B cell (primary cell): ENCODE measurements at regions of chr12 and their contacts with region 1.

Region 1: DNA sequence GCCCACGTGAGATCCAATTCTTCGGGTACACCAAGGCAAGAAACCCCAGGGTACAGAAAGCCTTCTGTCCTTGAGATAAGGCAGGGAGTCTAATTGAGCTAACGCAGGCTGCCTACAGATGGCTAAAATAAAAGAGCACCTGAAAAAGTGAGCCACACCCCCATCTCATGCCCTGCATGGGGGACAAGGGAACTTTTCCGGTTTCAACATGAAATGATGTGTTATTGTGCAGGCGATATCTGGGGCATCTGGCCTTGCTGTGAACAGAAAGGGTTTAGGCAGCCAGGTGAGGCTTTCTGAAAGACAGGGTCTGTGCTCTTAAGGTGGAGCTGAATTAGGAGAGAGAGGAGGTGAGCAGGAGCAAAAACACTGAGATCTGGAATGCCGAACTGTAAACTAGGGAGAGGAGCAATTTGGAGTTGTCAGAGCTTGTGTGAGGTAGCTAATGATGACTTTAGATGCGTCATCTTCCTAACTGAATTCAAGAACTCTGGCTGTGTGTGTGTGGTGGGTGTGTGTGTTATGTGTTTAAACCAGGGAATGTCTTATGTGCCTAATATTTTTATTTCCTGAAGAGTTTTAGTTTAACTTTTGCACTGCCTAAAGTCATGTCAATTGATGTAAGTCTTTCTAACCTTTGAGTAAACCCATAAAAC is 20.1 kb upstream of the LDHB start:
- DNase-seq: no peak
- ATAC-seq: no peak
- H3K4me3 ChIP-seq: no peak overlapping the region
- H3K4me3 Mint-ChIP-seq: no peak overlapping the region
- H3K27ac ChIP-seq: no peak overlapping the region
- H3K27ac Mint-ChIP-seq: no peak overlapping the region
- H3K4me1 ChIP-seq: no peaks in the 10 kb centered on the region
- H3K4me1 Mint-ChIP-seq: no peaks in the 10 kb centered on the region
- H3K27me3 ChIP-seq: no peaks in the 10 kb centered on the region
- H3K27me3 Mint-ChIP-seq: peaks cover 11% of the 10 kb centered on the region
- CTCF ChIP-seq: no peak

Region 2: DNA sequence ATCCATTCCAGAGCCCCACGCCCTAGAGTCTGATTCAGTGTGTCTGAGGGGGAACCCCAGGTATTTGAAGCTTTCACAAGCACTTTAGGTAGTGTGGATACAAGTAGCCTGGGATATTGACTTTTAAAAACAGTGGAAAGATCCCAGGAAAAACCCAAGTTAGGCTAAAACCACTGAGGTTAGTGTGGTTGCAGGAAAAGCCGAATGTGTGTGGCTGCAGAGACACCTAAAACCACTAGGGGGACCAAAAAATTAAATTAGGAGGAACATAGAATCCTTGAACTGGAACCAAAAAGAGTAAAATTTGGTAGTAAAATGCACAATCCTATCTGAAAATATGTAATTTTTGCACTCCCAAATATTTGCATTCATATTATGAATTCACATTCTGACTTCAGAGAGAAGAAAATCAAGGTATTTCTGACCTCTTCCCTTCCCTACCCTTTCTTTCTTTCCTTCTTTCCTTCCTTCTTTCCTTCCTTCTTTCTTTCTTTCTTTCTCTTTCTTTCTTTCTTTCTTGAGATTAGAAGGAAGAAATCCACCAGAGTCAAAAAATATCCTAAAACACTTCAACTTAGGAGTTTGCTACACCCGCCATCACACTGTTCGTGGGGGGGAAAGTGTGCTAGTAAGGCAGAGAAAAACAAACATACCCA is 380.9 kb before region 1 on chr12:
- CTCF ChIA-PET with region 1: interaction called, 8 read pairs
- POLR2A ChIA-PET with region 1: no interaction called
- intact Hi-C with region 1: loop called (anchors 1 kb)
- DNase-seq: peak; percentile 10
- ATAC-seq: no peak
- H3K4me3 ChIP-seq: no peak overlapping the region
- H3K4me3 Mint-ChIP-seq: no peak overlapping the region
- H3K27ac ChIP-seq: no peak overlapping the region
- H3K27ac Mint-ChIP-seq: no peak overlapping the region
- H3K4me1 ChIP-seq: no peaks in the 10 kb centered on the region
- H3K4me1 Mint-ChIP-seq: no peaks in the 10 kb centered on the region
- H3K27me3 ChIP-seq: no peaks in the 10 kb centered on the region
- H3K27me3 Mint-ChIP-seq: no peaks in the 10 kb centered on the region
- CTCF ChIP-seq: peak; percentile 78

Region 3: DNA sequence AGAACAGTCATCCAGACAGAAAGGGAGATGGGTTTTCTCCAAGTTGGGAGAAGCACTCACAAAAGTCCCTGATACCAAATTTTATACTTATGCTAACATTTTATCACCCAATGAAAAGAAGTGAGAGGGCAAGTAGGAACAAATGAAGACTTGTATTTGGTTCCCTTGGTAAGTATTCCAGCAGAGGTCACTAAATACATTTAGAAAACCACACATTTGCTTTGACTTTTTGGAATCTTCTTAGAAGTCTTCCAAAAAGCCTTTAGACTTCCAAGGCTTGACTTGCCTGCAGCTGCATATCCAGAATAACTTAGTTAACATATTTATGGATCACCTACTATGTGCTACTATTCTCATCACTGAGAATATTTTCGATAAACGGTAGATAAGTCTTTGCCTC is 70.0 kb before region 1 on chr12:
- CTCF ChIA-PET with region 1: interaction called, 5 read pairs
- POLR2A ChIA-PET with region 1: no interaction called
- intact Hi-C with region 1: loop called (anchors 2 kb)
- DNase-seq: no peak
- ATAC-seq: no peak
- H3K4me3 ChIP-seq: no peak overlapping the region
- H3K4me3 Mint-ChIP-seq: no peak overlapping the region
- H3K27ac ChIP-seq: no peak overlapping the region
- H3K27ac Mint-ChIP-seq: no peak overlapping the region
- H3K4me1 ChIP-seq: no peaks in the 10 kb centered on the region
- H3K4me1 Mint-ChIP-seq: no peaks in the 10 kb centered on the region
- H3K27me3 ChIP-seq: peaks cover 0 to 2% (median 0%) of the 10 kb centered on the region in 4 experiments
- H3K27me3 Mint-ChIP-seq: no peaks in the 10 kb centered on the region
- CTCF ChIP-seq: no peak

Region 4: DNA sequence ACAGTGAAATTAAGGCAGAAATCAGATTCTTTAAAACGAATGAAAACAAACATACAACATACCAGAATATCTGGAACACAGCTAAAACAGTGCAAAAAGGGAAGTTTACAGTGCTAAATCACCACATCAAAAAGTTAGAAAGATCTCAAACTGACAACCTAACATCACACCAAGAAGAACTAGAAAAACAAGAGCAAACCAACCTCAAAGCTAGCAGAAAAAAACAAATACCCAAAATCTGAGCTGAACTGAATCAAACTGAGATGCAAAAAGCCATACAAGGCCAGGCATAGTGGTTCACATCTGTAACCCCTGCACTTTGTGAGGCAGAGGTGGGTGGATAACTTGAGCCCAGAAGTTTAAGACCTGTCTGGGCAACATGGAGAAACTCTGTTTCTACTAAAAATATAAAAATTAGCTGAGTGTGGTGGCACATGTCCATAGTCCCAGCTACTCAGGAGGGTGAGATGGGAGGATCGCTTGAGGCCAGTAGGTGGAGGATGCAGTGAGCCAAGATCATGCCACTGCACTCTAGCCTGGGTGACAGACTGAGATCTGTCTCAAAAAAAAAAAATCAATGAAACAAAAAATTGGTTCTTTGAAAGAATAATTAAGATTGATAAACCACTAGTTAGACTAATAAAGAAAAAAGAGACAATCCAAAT is 13.1 kb after region 1 on chr12:
- CTCF ChIA-PET with region 1: interaction called, 16 read pairs
- POLR2A ChIA-PET with region 1: no interaction called
- intact Hi-C with region 1: no loop called
- DNase-seq: no peak
- ATAC-seq: no peak
- H3K4me3 ChIP-seq: no peak overlapping the region
- H3K4me3 Mint-ChIP-seq: no peak overlapping the region
- H3K27ac ChIP-seq: no peak overlapping the region
- H3K27ac Mint-ChIP-seq: no peak overlapping the region
- H3K4me1 ChIP-seq: no peaks in the 10 kb centered on the region
- H3K4me1 Mint-ChIP-seq: no peaks in the 10 kb centered on the region
- H3K27me3 ChIP-seq: peaks cover 0 to 4% (median 1%) of the 10 kb centered on the region in 4 experiments
- H3K27me3 Mint-ChIP-seq: peaks cover 13% of the 10 kb centered on the region
- CTCF ChIP-seq: no peak